Activated naive CD4-positive, alpha-beta T cell treated with anti-CD3 and anti-CD28 coated beads for 36 hours (primary cell): ENCODE measurements at regions of chr2 and their contacts with region 1.

Region 1: GRCh38 chr2:5365871-5366461 is 326.2 kb upstream of the SOX11 start:
- DNase-seq: peak; percentile 72
- H3K4me3 Mint-ChIP-seq: no peak overlapping the region
- H3K27ac Mint-ChIP-seq: no peak overlapping the region
- H3K4me1 Mint-ChIP-seq: no peaks in the 10 kb centered on the region
- H3K27me3 Mint-ChIP-seq: no peaks in the 10 kb centered on the region

Region 2: DNA sequence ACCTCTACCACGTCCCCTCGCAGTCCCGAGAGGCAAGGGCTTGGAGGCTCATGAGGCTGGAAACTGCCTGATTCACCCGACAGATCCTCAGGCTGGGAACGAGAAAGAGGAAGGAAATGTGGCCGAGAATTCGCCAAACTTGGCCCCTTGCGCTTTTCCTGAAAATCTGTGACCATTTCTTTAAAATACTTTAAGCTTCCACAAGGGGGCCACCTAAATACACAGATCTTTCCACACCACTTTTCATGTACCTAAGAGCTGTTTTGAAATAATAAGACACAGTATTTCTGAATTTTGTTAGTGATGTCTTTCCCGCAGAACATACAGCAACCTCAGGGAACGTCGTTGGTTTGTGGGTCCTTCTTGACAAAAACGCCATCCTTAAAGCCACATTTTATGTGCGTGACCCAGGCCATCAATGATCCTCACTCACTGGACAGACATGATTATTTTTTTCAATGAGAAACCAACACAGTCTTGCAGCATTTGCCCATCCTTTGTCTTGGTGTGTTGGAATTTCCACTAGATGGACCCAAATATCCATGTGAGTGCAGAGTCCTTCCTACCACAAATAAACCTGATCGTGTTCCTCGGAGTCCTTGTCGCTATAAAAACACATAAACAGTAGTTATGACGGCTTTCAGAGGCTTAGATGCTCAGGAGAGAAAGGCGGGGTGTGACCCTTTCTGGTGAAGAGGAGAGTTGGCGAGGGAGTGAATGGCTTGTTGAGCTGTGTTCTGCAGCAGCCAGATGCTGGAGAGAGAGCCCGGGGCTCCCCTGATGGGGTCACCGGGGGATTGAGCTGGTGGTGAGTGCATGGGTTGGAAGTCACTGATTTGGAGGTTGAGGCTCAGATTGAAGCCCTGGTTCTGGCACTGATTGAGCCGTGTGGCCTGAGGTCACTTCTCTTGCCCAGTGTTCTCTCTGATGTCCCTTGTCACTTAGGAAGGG is 1637.6 kb before region 1 on chr2:
- CTCF ChIA-PET with region 1: no interaction called
- intact Hi-C with region 1: loop called (anchors 5 kb)
- DNase-seq: no peak
- H3K4me3 Mint-ChIP-seq: no peak overlapping the region
- H3K27ac Mint-ChIP-seq: no peak overlapping the region
- H3K4me1 Mint-ChIP-seq: no peaks in the 10 kb centered on the region
- H3K27me3 Mint-ChIP-seq: peaks cover 10% of the 10 kb centered on the region

Region 3: DNA sequence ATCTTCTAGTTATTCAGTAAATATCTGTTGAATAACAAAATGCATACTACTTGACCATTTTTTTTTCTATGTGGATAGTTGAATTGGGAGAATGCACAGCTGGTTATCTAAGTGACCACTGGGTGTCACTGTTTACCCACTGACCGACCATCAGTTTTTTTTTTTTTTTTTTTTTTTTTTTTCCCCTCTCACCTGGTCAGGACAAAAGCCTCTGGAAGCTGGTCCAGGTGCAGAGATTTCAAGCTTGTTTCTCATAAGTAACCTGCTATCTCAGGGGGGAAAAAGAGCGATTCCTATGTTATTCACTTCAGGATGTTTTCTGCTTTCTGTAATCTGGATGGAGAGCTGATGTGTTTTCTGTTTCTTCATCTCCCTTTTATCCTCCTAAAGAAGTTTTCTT is 1406.6 kb before region 1 on chr2:
- CTCF ChIA-PET with region 1: interaction called, 5 read pairs
- intact Hi-C with region 1: loop called (anchors 2 kb)
- DNase-seq: no peak
- H3K4me3 Mint-ChIP-seq: no peak overlapping the region
- H3K27ac Mint-ChIP-seq: no peak overlapping the region
- H3K4me1 Mint-ChIP-seq: no peaks in the 10 kb centered on the region
- H3K27me3 Mint-ChIP-seq: no peaks in the 10 kb centered on the region

Region 4: GRCh38 chr2:4354678-4355077 is 1011.3 kb before region 1 on chr2:
- CTCF ChIA-PET with region 1: no interaction called
- intact Hi-C with region 1: loop called (anchors 10 kb)
- DNase-seq: peak; percentile 10
- H3K4me3 Mint-ChIP-seq: no peak overlapping the region
- H3K27ac Mint-ChIP-seq: no peak overlapping the region
- H3K4me1 Mint-ChIP-seq: no peaks in the 10 kb centered on the region
- H3K27me3 Mint-ChIP-seq: no peaks in the 10 kb centered on the region

Region 5: DNA sequence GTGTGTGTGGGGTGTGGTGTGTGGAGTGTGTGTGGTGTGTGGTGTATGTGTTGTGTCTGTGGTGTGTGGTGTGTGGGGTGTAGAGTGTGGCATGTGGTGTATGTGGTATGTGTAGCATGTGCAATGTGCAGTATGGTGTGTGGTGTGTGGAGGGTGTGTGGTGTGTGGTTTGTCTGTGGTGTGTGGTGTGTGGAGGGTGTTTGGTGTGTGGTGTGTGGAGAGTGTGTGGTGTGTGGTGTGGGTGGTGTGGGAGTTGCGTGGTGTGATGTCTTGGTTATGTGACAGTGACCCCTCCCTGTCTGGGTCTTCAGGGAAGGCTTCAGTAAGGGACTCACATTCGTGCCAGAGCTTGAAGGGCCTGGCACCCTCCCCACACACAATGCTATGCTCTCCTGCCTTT is 392.0 kb before region 1 on chr2:
- CTCF ChIA-PET with region 1: no interaction called
- intact Hi-C with region 1: no loop called
- DNase-seq: no peak
- H3K4me3 Mint-ChIP-seq: no peak overlapping the region
- H3K27ac Mint-ChIP-seq: no peak overlapping the region
- H3K4me1 Mint-ChIP-seq: no peaks in the 10 kb centered on the region
- H3K27me3 Mint-ChIP-seq: no peaks in the 10 kb centered on the region